HEK293 (cell line): ENCODE measurements at regions of chr1 and their contacts with region 1.

Region 1: GRCh38 chr1:176949033-176949662 is 215.4 kb downstream of the ASTN1 start:
- H3K4me3 ChIP-seq: no peak overlapping the region
- H3K27ac ChIP-seq: no peak overlapping the region
- H3K4me1 ChIP-seq: no peaks in the 10 kb centered on the region
- CTCF ChIP-seq: peak; percentile 52; the same call in 1 of the 2 replicates

Region 2: DNA sequence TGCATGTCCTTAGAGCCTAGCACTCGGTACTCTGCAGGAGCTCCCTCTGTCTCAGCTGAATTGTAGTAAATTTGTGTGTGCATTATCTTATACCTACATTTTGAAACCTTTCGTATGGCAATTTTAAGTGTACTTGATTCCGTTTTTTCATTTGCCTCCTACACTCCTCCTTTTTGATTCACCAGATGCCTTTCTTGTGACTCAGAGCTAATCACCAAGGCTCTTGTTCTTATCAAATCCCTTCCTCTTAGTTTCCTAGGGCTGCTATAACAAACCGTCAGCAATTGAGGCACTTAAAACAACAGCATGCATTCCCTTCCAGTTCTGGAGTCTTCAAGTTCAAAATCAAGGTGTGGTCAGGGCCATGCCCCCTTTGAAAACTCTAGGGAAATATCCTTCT is 45.7 kb before region 1 on chr1:
- CTCF ChIA-PET with region 1: interaction called, 21 read pairs
- POLR2A ChIA-PET with region 1: no interaction called
- H3K4me3 ChIP-seq: no peak overlapping the region
- H3K27ac ChIP-seq: no peak overlapping the region
- H3K4me1 ChIP-seq: no peaks in the 10 kb centered on the region
- CTCF ChIP-seq: no peak

Region 3: GRCh38 chr1:176959191-176959820 is 10.2 kb after region 1 on chr1:
- CTCF ChIA-PET with region 1: interaction called, 28 read pairs
- POLR2A ChIA-PET with region 1: no interaction called
- H3K4me3 ChIP-seq: no peak overlapping the region
- H3K27ac ChIP-seq: no peak overlapping the region
- H3K4me1 ChIP-seq: no peaks in the 10 kb centered on the region
- CTCF ChIP-seq: no peak